ENCODE measurements at regions of chr15 and their contacts with region 1.

Region 1: DNA sequence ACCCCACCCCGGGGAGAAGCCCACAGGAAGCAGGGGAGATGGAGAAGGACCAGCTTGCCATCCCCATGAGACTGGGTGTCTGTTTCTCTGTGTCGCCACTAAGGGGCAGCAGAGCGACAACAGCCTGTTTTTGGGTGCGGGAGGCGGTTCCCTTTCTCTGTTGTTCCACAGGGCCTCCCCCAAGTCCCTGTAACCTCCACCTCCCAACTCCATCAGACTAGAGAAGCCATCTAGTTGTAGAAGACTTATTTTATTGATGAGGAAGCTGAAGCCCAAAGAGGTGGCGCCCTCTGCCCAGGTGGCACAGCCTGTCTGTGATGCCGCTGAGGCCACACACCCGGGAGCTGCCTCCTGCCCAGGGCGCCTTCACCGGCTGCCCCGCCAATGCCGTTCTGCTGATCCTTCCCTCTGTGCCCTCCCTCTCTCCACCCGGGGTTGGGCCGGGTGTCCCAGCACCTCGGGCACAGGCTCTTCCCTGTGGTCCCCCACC is 3.9 kb upstream of the CCDC9B start:
- H3K4me3 ChIP-seq: no peak overlapping the region
- H3K27ac ChIP-seq: no peak overlapping the region
- H3K4me1 ChIP-seq: peaks cover 10% of the 10 kb centered on the region; the same call in 1 of the 2 replicates
- CTCF ChIP-seq: peak; percentile 49; the same call in 1 of the 2 replicates

Region 2: DNA sequence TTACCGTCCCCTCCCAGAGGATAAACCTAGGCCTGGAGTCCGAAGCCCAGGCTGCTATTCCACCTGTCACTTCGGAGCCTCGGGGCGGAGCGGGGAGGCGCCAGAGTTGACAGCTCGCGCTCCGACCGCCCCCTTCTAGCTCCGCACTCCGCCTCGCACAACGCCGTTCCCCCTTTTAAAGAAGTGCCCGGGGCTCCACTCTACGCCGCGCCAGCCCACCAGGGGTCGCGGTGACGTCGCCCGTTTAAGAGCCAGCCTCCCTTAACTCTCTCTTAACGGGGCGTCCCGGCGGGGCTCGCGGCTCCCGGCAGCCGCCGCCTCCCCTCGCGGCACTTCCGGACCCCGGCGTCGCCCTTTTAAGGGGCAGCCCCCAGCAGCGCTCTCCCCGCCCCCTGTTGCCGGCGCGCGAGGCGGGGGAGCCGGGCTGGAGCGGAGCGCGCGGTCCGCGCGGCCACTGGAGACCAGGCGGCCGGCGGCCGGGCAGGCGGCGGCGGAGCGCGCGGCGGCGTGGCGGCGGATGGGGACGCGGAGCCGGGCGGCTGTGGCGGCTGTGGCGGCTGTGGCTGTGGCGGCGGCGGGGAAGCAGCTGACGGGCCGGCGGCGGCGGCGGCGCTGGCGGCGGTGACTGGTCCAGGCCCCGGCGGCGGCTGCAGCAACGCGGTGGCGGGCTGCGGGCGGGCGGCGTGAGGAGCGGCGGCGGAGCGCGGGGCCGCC is 21.3 kb before region 1 on chr15 and contains the start of gene INAFM2:
- CTCF ChIA-PET with region 1: interaction called, 82 read pairs
- POLR2A ChIA-PET with region 1: interaction called, 3 read pairs
- H3K4me3 ChIP-seq: peak within 1 kb of the TSS; percentile 70
- H3K27ac ChIP-seq: peak within 1 kb of the TSS; percentile 81; the same call in 1 of the 2 replicates
- H3K4me1 ChIP-seq: peaks cover 13% of the 10 kb centered on the region; the same call in 1 of the 2 replicates
- CTCF ChIP-seq: peak; percentile 89

Region 3: GRCh38 chr15:40357723-40358470 is 13.2 kb after region 1 on chr15 and contains the start of gene DISP2:
- CTCF ChIA-PET with region 1: interaction called, 14 read pairs
- POLR2A ChIA-PET with region 1: no interaction called
- H3K4me3 ChIP-seq: peak within 1 kb of the TSS; percentile 48
- H3K27ac ChIP-seq: no peak within 1 kb of the TSS
- H3K4me1 ChIP-seq: 0 out of 2 replicates have a peak, but pooled peaks cover 4% of the 10 kb centered on the region
- CTCF ChIP-seq: 0 out of 2 replicates have a peak, but pooled peaks have one; percentile 14

Region 4: DNA sequence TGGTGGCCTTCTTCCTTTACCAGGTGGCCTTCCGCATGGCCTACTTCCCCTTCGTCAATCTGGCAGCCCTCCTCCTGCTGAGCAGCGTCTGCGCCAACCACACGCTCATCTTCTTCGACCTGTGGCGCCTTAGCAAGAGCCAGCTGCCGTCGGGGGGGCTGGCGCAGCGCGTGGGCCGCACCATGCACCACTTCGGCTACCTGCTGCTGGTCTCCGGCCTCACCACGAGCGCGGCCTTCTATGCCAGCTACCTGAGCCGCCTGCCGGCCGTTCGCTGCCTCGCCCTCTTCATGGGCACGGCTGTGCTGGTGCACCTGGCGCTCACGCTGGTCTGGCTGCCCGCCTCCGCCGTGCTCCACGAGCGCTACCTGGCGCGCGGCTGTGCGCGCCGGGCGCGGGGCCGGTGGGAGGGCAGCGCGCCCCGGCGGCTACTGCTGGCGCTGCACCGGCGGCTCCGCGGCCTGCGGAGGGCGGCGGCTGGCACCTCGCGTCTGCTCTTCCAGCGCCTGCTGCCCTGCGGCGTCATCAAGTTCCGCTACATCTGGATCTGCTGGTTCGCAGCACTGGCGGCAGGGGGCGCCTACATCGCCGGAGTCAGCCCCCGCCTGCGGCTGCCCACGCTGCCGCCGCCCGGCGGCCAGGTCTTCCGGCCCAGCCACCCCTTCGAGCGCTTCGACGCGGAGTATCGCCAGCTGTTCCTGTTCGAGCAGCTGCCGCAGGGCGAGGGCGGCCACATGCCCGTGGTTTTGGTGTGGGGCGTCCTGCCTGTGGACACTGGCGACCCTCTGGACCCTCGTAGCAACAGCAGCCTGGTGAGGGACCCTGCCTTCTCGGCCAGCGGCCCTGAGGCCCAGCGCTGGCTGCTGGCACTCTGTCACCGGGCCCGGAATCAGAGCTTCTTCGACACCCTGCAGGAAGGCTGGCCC is 23.3 kb after region 1 on chr15:
- CTCF ChIA-PET with region 1: interaction called, 11 read pairs
- POLR2A ChIA-PET with region 1: interaction called, 5 read pairs
- H3K4me3 ChIP-seq: no peak overlapping the region
- H3K27ac ChIP-seq: no peak overlapping the region
- H3K4me1 ChIP-seq: no peaks in the 10 kb centered on the region
- CTCF ChIP-seq: peak; percentile 94

Region 5: DNA sequence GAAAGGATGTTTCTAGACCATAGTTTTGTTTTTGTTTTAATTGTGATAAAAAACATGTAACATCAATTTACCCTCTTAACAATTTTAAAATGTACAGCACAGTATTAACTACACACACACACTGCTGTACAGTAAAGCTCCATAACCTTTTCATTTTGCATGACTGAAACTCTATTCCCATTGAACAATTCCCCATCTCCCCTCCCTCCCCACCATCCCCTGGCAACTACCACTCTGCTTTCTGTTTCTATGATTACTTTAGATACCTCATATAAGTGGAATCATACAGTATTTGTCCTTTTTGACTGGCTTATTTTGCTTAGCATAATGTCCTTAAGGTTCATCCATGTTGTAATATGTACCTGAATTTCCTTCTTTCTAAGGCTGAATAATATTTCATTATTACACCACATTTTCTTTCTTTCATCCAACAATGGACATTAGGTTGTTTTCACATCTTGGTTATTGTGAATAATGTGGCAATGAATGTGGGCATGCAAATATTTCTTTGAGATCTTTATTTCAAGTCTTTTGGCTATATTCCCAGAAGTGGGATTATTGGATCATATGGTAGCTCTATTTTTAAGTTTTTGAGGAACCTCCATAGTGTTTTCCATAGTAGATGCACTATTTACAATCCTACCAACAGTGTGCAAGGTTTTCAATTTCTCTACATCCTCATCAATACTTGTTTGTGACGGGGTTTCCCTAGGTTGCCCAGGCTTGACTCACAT is 136.8 kb after region 1 on chr15:
- CTCF ChIA-PET with region 1: no interaction called
- POLR2A ChIA-PET with region 1: no interaction called
- H3K4me3 ChIP-seq: no peak overlapping the region
- H3K27ac ChIP-seq: no peak overlapping the region
- H3K4me1 ChIP-seq: no peaks in the 10 kb centered on the region
- CTCF ChIP-seq: no peak

Region 6: GRCh38 chr15:40633143-40633542 is 288.5 kb after region 1 on chr15:
- CTCF ChIA-PET with region 1: no interaction called
- POLR2A ChIA-PET with region 1: no interaction called
- H3K4me3 ChIP-seq: no peak overlapping the region
- H3K27ac ChIP-seq: no peak overlapping the region
- H3K4me1 ChIP-seq: no peaks in the 10 kb centered on the region
- CTCF ChIP-seq: no peak

Measured in HEK293 (cell line).